Panc1 (cell line): ENCODE measurements at regions of chr6 and their contacts with region 1.

Region 1: GRCh38 chr6:30750379-30750668 is 6.0 kb upstream of the IER3 start:
- DNase-seq: no peak
- ATAC-seq: no peak
- H3K4me3 ChIP-seq: no peak overlapping the region
- H3K27ac ChIP-seq: peak overlapping the region; percentile 91
- H3K4me1 ChIP-seq: peaks cover 59% of the 10 kb centered on the region
- H3K27me3 ChIP-seq: no peaks in the 10 kb centered on the region
- CTCF ChIP-seq: no peak

Region 2: DNA sequence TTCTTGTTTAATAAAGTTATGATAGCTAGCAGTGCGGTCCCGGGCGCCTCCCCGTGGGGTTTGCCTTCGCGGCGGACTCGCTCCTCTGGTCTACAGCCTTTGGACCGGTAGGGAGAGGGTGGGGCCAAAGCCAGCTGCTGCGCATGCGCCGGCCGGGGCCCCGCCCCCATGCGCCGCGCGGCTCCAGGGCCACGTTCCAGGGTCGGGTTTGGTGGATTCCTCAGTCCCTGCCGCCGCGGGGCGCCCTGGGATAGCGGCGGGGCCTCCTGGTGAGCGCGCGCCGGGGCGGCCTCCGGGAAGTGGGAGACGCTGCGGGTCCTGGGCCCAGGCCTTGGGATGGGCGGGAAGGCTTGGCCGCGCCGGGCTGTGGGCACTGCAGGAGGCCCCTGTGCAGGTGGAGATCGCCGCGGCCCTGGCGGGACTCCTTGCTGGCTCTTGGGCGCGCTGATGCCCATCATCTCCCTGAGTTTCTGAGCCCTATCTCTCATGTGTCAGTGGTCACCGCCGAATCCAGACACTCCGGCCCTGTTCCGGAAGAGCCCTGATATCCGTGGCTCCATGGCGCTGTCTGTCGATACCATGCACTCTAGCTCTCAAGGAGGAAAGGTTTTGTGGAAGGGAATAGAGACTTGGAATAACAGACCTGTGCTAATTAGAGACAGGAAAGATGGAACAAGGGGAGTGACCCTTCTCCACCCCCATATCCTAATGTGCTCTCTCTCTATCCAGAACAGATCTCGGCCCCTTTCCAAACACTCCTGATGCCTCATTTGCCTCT is 163.9 kb after region 1 on chr6 and contains the start of gene VARS2:
- CTCF ChIA-PET with region 1: no interaction called
- POLR2A ChIA-PET with region 1: interaction called, 11 read pairs
- in situ Hi-C with region 1: no loop called
- intact Hi-C with region 1: no loop called
- DNase-seq: peak; percentile 64
- ATAC-seq: peak; percentile 97
- H3K4me3 ChIP-seq: peak within 1 kb of the TSS; percentile 66 to 89
- H3K27ac ChIP-seq: peak within 1 kb of the TSS; percentile 92
- H3K4me1 ChIP-seq: peaks cover 14% of the 10 kb centered on the region
- H3K27me3 ChIP-seq: no peaks in the 10 kb centered on the region
- CTCF ChIP-seq: peak; percentile 30; the same call in 1 of the 2 replicates
- total RNA-seq, gene VARS2: 42.7 TPM